Posterior vena cava (tissue), 2 donors: ENCODE measurements at regions of chr18 and their contacts with region 1.

Region 1: GRCh38 chr18:31767629-31768028 is 6.9 kb upstream of the SLC25A52 start:
- DNase-seq: no peak

Region 2: GRCh38 chr18:31648966-31649429 is 118.6 kb before region 1 on chr18:
- intact Hi-C with region 1: loop called in 1 of 2 experiments (anchors 5 kb)
- DNase-seq: no peak

Region 3: GRCh38 chr18:31710826-31711225 is 56.8 kb before region 1 on chr18:
- intact Hi-C with region 1: no loop called
- DNase-seq: no peak

Region 4: DNA sequence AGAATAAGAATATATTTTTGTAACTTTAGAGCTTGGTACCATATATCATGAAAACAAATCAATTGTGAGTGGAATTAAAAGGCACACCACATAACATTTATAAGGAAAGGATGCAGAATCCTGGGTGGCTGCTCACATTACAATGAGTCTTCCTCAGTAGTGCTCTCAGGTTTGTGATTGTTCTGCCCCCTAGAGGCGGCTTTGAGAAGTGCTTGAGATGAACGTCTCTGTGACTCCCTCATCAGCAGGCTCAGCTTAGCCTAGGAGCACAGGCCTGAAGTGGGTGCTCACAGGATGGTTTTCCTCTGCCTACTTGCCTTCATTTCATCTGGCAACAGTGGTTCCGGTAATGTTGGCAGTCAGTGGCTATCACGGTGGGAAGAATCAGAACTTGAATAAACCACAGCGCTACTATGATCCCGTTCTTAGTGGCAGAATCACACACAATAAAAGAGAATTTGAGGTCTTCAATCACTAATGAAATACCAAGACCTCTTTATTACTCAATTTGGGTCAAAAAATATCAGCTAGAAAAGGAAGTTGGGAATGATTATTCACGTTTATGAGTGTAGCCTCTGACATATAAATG is 45.2 kb before region 1 on chr18:
- intact Hi-C with region 1: no loop called
- DNase-seq: peak; percentile 84